ENCODE measurements at regions of chr2 and their contacts with region 1.

Region 1: DNA sequence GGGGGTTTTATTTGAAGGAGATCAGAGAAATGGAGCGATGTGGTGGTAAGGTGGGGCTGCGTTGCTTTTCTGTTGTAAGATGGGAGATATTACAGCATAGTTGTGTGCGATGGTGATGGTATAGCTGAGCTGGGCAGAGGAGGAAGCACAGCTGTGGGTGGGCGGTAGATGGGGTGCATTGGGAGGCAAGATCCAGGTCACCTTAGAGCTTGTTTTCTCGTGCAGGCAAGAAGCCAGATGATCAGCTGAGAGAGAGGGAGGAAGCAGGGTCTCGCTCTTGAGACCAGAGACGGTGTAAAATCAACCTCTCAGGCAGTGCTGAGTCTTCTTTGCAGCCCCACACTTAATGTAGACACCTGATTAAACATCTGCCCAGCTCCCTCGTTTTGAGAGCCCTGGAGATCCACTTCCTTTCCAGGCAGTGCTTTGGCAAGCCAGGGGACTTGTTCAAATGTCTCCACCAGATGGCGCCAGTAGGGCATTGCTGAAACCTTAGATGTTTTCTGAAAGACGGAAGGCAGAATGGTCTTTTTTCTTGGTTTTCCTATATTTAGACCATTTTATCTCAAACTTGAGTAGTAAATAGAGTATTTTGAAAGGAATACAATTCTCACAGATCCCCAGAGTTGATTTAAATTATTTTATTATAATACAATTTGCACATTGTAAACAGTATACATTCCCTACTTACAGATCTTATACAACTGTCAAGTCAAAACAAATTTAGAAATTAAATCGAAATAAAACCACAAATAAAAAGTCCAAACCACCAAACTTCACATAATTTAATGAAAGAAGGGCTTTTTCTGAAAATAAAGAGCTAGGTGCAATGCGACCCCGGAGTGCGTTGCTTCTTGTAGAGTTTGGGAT is 21.1 kb upstream of the LYPD6B start:
- H3K4me3 ChIP-seq: no peak overlapping the region
- H3K27ac ChIP-seq: no peak overlapping the region
- H3K4me1 ChIP-seq: 0 out of 2 replicates have a peak, but pooled peaks cover 2% of the 10 kb centered on the region
- CTCF ChIP-seq: peak; percentile 55; the same call in 1 of the 2 replicates

Region 2: GRCh38 chr2:148582679-148583511 is 434.5 kb before region 1 on chr2:
- CTCF ChIA-PET with region 1: no interaction called
- POLR2A ChIA-PET with region 1: no interaction called
- H3K4me3 ChIP-seq: no peak overlapping the region
- H3K27ac ChIP-seq: no peak overlapping the region
- H3K4me1 ChIP-seq: no peaks in the 10 kb centered on the region
- CTCF ChIP-seq: no peak

Region 3: GRCh38 chr2:149006883-149007540 is 10.3 kb before region 1 on chr2:
- CTCF ChIA-PET with region 1: interaction called, 19 read pairs
- POLR2A ChIA-PET with region 1: no interaction called
- H3K4me3 ChIP-seq: no peak overlapping the region
- H3K27ac ChIP-seq: no peak overlapping the region
- H3K4me1 ChIP-seq: no peaks in the 10 kb centered on the region
- CTCF ChIP-seq: no peak

Region 4: DNA sequence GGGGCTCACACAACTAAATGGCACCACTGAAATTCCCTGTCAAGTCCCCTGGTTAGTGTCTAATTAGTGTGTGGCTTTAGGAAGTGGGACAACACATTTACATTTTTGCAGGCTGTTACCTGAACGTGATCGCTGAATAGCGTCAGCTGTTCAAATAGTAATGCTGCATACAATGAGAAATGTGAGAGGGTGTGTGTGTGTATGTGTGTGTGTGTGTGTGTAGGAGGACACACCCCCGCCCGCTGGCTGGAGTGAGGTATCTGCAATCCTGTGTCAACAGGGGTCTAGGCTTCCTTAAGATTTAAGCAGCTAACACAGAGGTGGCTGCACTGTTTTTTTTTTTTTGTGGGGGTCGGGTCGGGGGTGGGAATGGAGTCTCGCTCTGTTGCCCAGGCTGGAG is 16.4 kb after region 1 on chr2:
- CTCF ChIA-PET with region 1: interaction called, 18 read pairs
- POLR2A ChIA-PET with region 1: no interaction called
- H3K4me3 ChIP-seq: no peak overlapping the region
- H3K27ac ChIP-seq: no peak overlapping the region
- H3K4me1 ChIP-seq: no peaks in the 10 kb centered on the region
- CTCF ChIP-seq: 0 out of 2 replicates have a peak, but pooled peaks have one; percentile 9

Region 5: DNA sequence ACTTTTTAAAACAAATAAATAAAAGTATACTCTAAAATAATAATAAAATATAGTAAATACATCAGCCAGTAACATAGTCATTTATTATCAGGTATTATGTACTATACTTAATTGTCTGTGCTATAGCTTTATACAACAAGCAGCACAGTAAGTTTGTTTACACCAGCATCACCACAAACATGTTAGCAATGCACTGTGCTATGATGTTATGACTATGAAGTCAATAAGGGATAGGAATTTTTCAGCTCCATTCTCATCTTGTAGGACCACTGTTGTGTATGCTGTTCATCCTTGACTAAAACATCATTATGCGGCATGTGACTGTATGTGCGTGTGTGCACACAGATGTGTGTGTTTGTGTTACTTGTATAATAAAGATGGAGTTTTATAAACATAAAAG is 158.6 kb after region 1 on chr2:
- CTCF ChIA-PET with region 1: no interaction called
- POLR2A ChIA-PET with region 1: no interaction called
- H3K4me3 ChIP-seq: no peak overlapping the region
- H3K27ac ChIP-seq: no peak overlapping the region
- H3K4me1 ChIP-seq: no peaks in the 10 kb centered on the region
- CTCF ChIP-seq: no peak

Region 6: DNA sequence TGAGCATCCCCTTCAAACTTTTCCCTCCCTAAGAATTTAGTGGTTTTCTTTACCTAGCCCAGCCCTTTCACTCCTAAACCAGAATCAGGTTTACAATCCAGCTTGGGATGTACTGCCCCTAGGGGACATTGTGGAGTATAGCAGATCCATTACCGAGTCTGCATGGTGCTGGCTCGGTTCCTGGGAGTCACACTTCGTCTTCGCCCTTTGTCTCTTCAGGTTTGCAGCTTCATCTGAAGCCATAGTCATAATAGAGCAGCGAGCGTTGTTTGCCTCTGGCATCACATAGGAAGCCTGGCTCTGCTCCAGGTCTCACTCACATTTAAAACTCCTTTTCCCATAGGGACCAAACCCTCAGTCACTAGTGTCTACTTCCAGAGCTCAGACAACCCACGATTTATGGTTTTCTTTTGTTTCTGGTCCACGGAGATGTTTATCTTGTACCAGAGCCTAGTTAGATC is 296.2 kb after region 1 on chr2:
- CTCF ChIA-PET with region 1: interaction called, 13 read pairs
- POLR2A ChIA-PET with region 1: no interaction called
- H3K4me3 ChIP-seq: no peak overlapping the region
- H3K27ac ChIP-seq: no peak overlapping the region
- H3K4me1 ChIP-seq: peaks cover 10% of the 10 kb centered on the region
- CTCF ChIP-seq: peak; percentile 69

Region 7: GRCh38 chr2:149383340-149383739 is 366.0 kb after region 1 on chr2:
- CTCF ChIA-PET with region 1: no interaction called
- POLR2A ChIA-PET with region 1: no interaction called
- H3K4me3 ChIP-seq: no peak overlapping the region
- H3K27ac ChIP-seq: no peak overlapping the region
- H3K4me1 ChIP-seq: 0 out of 2 replicates have a peak, but pooled peaks cover 4% of the 10 kb centered on the region
- CTCF ChIP-seq: no peak

Region 8: DNA sequence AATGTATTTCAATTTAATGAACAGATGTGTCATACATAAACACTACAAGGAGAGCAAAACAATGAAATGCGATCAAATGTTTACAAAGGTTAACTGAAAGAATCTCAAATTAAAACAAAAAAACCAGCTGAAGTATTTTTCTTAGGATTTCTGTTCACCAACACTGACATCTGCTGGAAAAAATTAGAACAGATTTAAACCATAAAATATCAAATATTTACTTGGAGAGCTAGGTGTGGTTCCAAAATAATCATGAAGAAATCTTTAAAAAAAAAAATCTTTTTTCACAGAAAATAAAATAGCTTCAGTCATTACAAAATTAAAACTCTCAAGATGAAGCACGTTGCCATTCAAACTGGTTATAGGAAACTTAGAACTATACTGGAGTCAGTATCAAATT is 556.4 kb after region 1 on chr2:
- CTCF ChIA-PET with region 1: interaction called, 23 read pairs
- POLR2A ChIA-PET with region 1: no interaction called
- H3K4me3 ChIP-seq: no peak overlapping the region
- H3K27ac ChIP-seq: no peak overlapping the region
- H3K4me1 ChIP-seq: no peaks in the 10 kb centered on the region
- CTCF ChIP-seq: no peak